PC-3 (cell line): ENCODE measurements at regions of chr3 and their contacts with region 1.

Region 1: GRCh38 chr3:177420643-177421480 is 223.6 kb upstream of the TBL1XR1 start:
- DNase-seq: peak; percentile 46
- ATAC-seq: peak; percentile 29
- H3K4me3 ChIP-seq: no peak overlapping the region
- H3K27ac ChIP-seq: no peak overlapping the region
- H3K4me1 ChIP-seq: peaks cover 12% of the 10 kb centered on the region
- H3K27me3 ChIP-seq: no peaks in the 10 kb centered on the region
- CTCF ChIP-seq: no peak

Region 2: GRCh38 chr3:177359593-177360357 is 61.1 kb before region 1 on chr3:
- CTCF ChIA-PET with region 1: no interaction called
- POLR2A ChIA-PET with region 1: no interaction called
- intact Hi-C with region 1: no loop called
- DNase-seq: peak; percentile 99
- ATAC-seq: peak; percentile 59
- H3K4me3 ChIP-seq: peak overlapping the region; percentile 53
- H3K27ac ChIP-seq: peak overlapping the region; percentile 95
- H3K4me1 ChIP-seq: peaks cover 45% of the 10 kb centered on the region
- H3K27me3 ChIP-seq: no peaks in the 10 kb centered on the region
- CTCF ChIP-seq: no peak

Region 3: DNA sequence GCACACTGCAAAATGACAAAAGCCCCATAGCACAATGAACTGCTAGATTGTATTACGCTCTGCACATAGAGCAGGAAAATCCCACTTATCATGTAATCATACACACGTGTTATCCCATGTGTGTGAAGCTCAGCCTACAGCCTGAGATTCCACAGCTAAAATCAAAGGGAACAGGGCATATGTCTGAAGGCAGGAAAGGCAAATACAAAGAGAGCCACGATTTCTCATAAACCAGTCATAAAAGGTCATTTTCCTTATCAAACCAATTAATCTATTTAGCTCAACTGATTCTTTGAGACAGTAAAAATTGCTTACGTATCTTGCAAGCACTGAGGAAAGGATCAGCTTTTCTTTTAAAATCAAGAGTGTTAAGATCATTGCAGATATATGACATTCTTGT is 24.1 kb before region 1 on chr3:
- CTCF ChIA-PET with region 1: no interaction called
- POLR2A ChIA-PET with region 1: interaction called, 3 read pairs
- intact Hi-C with region 1: loop called (anchors 1 kb)
- DNase-seq: no peak
- ATAC-seq: peak; percentile 29; the same call in 1 of the 2 replicates
- H3K4me3 ChIP-seq: no peak overlapping the region
- H3K27ac ChIP-seq: no peak overlapping the region
- H3K4me1 ChIP-seq: peaks cover 5% of the 10 kb centered on the region; the same call in 1 of the 2 replicates
- H3K27me3 ChIP-seq: no peaks in the 10 kb centered on the region
- CTCF ChIP-seq: no peak

Region 4: DNA sequence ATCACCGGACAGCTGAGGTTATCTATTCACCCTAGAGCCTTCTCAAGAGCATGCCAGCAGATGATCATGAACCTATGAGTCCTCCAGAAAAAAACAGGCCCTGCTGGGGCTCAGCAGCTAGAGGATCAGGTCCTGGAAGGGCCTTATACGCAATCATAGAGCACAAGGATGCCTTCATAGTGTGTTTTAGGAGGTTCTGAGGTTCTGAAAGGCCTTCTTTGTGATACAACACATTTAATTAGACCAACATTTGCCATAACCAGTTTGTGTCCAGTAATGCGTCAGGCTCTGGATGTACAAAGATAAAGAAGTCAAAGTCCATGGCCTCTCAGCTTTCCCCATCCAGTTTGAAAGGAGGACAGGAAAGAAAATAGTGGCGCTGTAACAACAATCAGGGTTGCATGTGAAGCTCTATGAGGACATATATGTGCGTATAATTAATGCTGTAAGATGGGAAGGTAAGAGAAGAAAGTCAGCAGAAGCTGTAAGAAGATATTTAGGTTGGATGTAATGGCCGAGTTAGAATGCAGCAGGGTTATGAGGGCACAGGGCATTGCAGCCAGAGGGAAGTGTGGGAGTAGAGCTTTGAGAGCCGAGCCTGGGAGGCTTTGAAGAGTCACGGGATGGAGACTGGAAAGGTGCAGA is 79.0 kb after region 1 on chr3:
- CTCF ChIA-PET with region 1: no interaction called
- POLR2A ChIA-PET with region 1: no interaction called
- intact Hi-C with region 1: no loop called
- DNase-seq: no peak
- ATAC-seq: no peak
- H3K4me3 ChIP-seq: no peak overlapping the region
- H3K27ac ChIP-seq: no peak overlapping the region
- H3K4me1 ChIP-seq: peaks cover 8% of the 10 kb centered on the region
- H3K27me3 ChIP-seq: no peaks in the 10 kb centered on the region
- CTCF ChIP-seq: no peak